AG04450 (cell line): ENCODE measurements at regions of chr3 and their contacts with region 1.

Region 1: DNA sequence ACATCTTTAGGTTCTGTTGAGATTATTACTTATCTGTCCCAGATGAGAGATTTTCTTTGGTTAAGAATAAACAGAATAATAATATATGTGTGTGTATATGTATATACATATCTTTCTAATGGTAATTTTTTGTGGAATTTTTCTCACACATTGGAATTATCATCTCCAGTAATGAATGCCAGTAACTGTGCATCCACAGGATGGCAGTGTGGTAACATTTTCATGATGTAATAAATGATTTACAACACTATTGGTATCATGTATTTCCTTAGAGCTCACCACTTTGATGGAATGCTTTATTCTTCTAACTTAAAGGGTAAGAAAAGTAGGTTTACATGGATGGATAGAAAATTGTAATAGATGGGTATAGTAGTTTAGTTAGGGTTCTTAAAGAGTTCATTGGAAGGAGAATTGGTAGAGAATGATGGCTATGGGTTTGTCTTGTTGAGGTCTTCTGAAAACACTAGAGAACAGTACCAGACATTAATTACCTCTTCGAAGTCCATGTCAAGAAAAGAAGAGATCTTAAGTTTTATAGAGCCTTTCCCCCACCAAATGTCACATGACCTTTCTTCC is 78.1 kb downstream of the STT3B start:
- DNase-seq: no peak
- H3K4me3 ChIP-seq: no peak overlapping the region
- H3K27ac ChIP-seq: no peak overlapping the region
- H3K27me3 ChIP-seq: no peaks in the 10 kb centered on the region
- CTCF ChIP-seq: peak; percentile 69

Region 2: DNA sequence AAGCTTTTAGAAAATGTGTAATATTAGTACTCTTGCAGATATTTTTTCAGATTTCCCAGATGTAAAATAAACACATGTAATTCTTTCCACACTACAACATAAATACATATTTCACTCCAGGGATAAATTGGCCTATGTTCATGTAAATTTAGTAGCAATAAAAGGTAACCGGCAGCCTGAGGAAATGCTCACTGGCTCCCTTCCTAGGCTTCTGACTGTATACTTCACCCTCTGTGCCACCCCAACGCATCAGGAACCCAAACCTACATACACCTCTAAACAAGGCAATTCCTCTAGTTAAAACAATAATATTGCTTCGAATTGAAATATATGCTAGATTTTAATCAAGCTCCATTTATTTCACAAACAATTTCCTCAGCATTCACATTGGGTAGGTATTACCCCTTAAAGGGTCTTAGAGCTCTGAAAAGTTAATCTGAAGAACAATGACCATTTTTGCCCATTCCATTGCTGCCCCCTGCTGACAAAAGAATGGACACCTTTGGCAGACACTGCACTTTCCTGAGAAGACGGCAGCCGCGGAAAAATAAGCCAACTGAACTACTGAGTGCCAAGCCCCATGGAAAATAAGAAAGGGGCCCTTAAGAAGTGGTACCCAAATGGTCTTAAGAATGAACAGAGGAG is 157.8 kb after region 1 on chr3:
- CTCF ChIA-PET with region 1: interaction called, 11 read pairs
- POLR2A ChIA-PET with region 1: no interaction called
- DNase-seq: no peak
- H3K4me3 ChIP-seq: no peak overlapping the region
- H3K27ac ChIP-seq: no peak overlapping the region
- H3K27me3 ChIP-seq: no peaks in the 10 kb centered on the region
- CTCF ChIP-seq: peak; percentile 72

Region 3: DNA sequence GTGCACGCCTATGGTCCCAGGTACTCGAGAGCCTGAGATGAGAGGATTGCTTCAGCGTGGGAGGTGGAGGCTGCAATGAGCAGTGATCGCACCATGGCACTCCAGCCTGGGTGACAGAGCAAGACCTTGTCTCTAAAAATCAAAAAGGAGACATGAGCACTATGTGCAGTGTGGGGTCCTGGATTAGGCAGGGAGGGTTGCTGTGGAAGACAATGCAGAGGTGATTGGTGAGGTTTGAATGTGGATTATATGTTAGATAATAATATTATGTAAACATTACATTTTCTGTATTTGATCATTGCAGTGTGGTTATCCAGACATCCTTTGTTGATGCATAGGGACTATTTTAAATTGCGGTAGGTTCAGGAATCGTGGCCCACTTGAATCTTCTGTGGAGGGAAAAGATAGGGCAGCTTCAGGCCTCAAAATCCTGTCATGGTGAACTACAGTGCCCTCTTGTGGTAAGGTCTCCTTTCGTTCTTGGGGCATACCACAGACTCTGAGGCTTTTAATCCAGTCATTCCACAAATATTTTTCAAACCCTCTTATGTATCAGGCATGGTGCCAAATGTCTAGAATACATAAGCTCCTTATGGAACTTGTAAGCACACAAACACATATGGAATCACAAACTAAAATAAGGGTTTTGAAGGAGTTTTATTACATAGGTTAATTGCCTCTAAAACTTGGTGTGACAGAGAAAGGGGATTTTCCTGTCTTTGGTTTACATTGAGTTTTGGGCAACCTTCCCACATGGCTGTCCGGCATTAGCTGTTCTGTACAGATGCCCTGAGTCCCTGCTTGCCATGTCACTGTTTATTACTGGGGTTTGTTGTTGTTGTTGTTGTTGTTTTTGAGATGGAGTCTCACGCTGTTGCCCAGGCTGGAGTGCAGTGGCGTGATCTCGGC is 533.3 kb after region 1 on chr3:
- CTCF ChIA-PET with region 1: interaction called, 12 read pairs
- POLR2A ChIA-PET with region 1: no interaction called
- DNase-seq: peak; percentile 91
- H3K4me3 ChIP-seq: no peak overlapping the region
- H3K27ac ChIP-seq: peak overlapping the region; percentile 34
- H3K27me3 ChIP-seq: no peaks in the 10 kb centered on the region
- CTCF ChIP-seq: peak; percentile 77

Region 4: DNA sequence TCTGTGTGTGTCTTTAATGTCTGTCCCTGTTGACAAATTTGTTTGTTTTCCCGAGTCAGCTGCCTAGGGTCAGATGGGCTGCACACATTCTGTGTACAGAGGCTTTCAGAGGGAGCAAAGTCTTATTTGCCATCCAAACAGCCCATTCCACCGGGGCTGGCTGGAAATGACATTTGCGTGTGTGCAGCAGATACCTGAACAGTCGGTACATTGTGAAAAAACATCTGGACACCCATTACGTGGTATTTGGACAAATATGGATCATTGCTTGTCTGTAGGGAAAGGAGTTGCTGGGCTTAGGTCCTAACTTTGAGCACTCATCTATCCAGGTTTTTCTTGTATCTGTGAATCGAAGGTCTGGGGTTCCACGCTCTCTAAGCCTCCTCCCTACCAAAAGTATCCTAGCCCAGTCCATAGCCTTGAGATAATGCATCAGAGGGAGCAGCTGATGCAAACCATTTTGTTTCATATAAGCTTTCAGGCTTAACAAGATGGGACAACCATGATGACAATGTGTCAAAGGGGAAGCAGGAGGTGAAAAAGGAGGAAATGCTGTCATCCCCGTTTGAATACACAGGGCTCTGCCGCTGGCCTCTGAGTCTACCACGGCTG is 605.5 kb after region 1 on chr3:
- CTCF ChIA-PET with region 1: no interaction called
- POLR2A ChIA-PET with region 1: no interaction called
- DNase-seq: no peak
- H3K4me3 ChIP-seq: no peak overlapping the region
- H3K27ac ChIP-seq: no peak overlapping the region
- H3K27me3 ChIP-seq: peaks cover 10% of the 10 kb centered on the region
- CTCF ChIP-seq: no peak